Sciatic nerve (tissue), 2 donors: ENCODE measurements at regions of chr6 and their contacts with region 1.

Region 1: DNA sequence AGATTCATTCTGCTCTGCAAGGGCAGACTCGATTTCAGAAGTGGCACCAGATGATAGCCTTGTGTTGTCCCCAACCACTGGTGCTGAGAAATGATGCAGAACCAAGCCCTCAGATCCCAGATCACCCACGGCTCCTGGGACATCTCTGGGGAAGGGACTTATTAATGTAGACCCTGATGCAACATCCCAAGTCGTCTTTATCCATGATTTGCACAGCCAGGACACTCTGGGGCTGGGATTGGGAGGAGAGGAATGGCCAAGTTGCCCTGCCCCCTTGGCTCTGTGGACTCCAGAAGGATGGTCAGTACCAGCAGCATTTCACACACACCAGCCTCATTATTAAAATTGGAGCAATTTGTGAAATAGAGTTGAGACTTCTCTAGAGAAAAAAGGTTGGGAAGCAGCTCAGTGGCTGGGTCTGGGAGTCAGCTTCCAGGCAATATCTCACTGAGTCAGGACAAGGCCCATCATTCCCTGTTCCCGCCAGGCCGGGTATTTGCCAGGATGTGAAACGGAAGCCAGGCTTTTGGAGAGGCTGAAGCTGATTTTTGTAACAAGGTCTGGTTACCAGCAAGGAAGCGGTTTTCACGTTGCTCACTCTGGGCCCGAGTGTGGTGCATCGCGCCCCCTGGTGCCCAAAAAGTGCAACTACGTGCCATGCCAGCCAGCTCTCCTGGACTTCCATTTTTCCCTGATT is 67.4 kb downstream of the ZBTB2 start:
- DNase-seq: peak; percentile 92
- ATAC-seq: peak; percentile 90

Region 2: GRCh38 chr6:150891888-150892485 is 432.0 kb before region 1 on chr6:
- intact Hi-C with region 1: loop called (anchors 5 kb)
- DNase-seq: peak; percentile 84
- ATAC-seq: peak; percentile 84

Region 3: DNA sequence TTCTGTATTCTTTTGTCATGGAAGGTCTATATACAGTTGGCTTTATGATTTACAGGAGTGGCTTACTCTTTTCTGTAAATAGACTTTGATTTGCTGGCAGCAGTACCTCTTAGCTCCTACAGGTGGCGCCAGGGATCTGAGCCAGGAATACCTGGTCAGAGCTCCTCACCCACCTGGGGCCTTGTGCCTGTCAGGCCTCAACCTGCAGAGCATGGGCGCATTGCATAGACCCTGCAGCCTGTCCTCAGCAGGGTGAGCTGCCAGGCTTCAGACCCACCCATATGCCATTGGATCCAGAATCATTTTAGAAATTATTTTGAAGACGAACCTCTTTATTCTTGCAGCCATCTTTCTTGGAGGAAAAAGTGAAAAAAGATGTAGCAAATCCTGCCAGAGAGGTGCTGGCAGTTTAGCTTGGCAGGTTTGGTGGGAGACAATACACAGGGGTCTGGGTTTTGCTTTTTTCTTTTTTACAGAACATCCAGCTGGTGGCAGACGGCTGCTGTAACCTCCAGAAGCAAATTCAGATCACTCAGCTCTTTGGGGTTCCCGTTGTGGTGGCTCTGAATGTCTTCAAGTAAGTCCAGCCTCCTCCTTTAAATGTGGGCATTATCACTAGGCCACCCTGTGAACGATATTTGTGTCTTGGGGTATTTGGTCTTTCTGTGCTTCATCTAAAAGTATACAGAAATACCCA is 309.4 kb before region 1 on chr6:
- intact Hi-C with region 1: loop called (anchors 10 kb)
- DNase-seq: peak; percentile 80
- ATAC-seq: peak; percentile 75

Region 4: GRCh38 chr6:151269321-151269995 is 54.5 kb before region 1 on chr6:
- intact Hi-C with region 1: no loop called
- DNase-seq: no peak
- ATAC-seq: peak; percentile 46